Activated T-helper 1 cell treated with anti-CD3 and anti-CD28 coated beads, Interleukin-12 subunit alpha, Interleukin-12 subunit beta, Interleukin-2, Interleukin-4 antibody, amounts not matched to agents 30 ng/mL and 10 ng/mL and 1 ng/mL, durations not matched to agents 14 hours and 24 hours and 36 hours (primary cell): ENCODE measurements at regions of chr10 and their contacts with region 1.

Region 1: DNA sequence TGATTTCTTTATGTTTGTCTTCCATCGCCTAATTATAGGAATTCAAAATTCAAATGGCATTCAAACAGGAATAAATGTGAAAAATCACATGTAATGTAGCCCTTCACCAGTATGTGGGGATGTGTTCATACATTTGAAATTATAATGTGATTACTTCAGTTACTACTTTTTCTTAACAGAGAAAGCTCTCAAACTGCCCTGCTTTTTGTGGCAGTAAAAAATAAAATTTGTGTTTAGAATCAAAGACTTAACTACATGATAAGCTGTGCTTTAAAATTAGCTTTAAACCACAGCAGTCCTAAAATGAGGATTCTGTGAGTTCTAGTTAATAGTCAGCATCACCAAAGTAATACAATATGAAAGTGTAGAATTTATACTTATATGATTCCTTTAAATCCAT is 7.8 kb upstream of the HERC4 start:
- DNase-seq: no peak
- H3K4me3 Mint-ChIP-seq: no peak overlapping the region
- H3K27ac Mint-ChIP-seq: no peak overlapping the region
- H3K4me1 Mint-ChIP-seq: peaks cover 7% of the 10 kb centered on the region
- H3K27me3 Mint-ChIP-seq: peaks cover 15% of the 10 kb centered on the region

Region 2: GRCh38 chr10:67943909-67944308 is 139.0 kb before region 1 on chr10:
- intact Hi-C with region 1: no loop called
- DNase-seq: no peak
- H3K4me3 Mint-ChIP-seq: no peak overlapping the region
- H3K27ac Mint-ChIP-seq: no peak overlapping the region
- H3K4me1 Mint-ChIP-seq: no peaks in the 10 kb centered on the region
- H3K27me3 Mint-ChIP-seq: no peaks in the 10 kb centered on the region

Region 3: DNA sequence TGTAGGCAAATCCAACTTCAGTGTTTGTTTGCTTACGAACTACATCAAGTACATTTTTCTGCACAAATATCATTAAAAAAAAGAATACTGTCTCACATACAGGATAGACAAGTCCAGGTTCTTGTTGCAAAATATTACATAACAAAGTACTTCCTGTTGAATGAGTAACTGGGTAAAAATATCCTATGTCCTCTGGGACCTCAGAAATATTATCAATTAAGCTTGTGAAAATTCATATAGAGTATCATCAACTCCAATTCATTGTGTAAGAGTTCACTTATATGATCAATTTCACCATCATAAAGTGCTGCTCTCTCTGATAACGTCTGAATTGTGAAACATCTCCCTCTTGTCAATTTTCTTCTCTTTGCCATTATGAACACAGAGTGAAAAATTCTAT is 30.4 kb before region 1 on chr10:
- intact Hi-C with region 1: no loop called
- DNase-seq: no peak
- H3K4me3 Mint-ChIP-seq: no peak overlapping the region
- H3K27ac Mint-ChIP-seq: no peak overlapping the region
- H3K4me1 Mint-ChIP-seq: peaks cover 20% of the 10 kb centered on the region
- H3K27me3 Mint-ChIP-seq: no peaks in the 10 kb centered on the region

Region 4: DNA sequence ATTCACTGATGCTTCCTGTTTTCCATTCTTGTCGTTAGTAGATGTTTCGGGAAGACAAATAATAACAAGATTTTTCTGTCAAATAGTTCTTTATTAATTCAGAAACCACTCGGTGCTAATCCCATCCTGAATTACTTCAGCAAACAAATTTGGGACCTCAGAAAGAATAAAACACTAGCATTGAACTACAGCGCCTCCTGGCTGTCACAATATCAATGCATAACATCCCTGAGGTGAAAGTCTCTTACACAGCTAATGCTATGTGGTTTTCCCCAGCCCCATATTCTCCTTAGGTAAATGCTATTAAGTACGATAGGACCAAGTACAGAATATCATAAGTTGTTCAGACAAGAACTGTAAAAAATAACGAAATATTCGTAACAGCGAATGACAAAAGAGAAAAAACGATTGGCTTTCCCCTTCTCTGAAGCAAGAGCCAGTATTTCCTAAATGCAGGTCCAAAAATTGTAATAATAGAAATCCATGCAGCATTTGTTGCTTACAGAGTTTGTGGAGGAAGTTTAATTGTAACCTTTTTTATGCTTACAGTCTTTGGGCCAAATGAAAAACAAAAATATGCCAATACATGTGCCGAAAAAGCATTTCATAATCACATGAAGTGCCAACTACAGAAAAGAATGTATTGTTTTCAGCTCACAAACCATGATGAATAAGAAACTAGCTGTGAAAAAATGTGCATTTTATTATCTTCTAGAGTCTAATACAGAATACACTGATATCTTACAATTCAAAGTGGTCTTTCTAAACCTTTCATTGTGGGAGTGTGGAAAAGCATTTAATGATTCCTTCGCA is 73.7 kb after region 1 on chr10:
- intact Hi-C with region 1: loop called (anchors 2 kb)
- DNase-seq: peak; percentile 26
- H3K4me3 Mint-ChIP-seq: no peak overlapping the region
- H3K27ac Mint-ChIP-seq: no peak overlapping the region
- H3K4me1 Mint-ChIP-seq: no peaks in the 10 kb centered on the region
- H3K27me3 Mint-ChIP-seq: no peaks in the 10 kb centered on the region